ENCODE measurements at regions of chr1 and their contacts with region 1.

Region 1: DNA sequence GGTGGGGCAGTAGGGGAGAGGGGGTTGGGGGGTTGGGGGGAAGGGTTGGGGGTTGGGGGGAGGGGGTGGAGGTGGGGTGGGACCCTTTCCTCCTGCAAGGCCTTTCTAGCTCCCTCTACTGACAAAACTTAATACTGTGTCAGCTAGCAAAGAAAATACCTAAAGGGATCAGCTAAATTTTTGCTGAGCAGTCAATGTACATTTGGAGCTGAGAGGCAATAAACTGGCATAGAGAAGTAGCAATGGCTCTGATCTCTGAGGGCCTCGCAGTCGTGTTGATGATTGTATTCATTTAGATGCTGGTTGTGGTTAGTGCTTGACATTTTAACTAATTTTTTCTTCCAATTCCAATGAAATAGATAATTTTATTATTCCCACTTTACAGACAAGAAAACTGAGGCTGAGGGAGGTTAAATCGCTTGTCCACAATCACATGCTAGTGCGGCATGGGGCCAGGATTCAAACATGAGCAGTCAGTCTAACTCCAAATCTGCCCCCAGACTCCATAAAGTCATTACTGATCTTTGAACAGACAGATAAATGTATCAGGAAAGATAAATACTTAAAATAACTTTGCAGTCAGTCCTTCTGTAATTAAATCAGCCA is 357.1 kb downstream of the DISC1 start:
- DNase-seq: no peak
- ATAC-seq: peak; percentile 74
- H3K4me3 Mint-ChIP-seq: no peak overlapping the region
- H3K27ac Mint-ChIP-seq: no peak overlapping the region
- H3K4me1 Mint-ChIP-seq: peaks cover 17% of the 10 kb centered on the region
- H3K27me3 Mint-ChIP-seq: no peaks in the 10 kb centered on the region; the same call in 1 of the 2 replicates
- CTCF ChIP-seq: peak; percentile 17; the same call in 1 of the 2 replicates

Region 2: DNA sequence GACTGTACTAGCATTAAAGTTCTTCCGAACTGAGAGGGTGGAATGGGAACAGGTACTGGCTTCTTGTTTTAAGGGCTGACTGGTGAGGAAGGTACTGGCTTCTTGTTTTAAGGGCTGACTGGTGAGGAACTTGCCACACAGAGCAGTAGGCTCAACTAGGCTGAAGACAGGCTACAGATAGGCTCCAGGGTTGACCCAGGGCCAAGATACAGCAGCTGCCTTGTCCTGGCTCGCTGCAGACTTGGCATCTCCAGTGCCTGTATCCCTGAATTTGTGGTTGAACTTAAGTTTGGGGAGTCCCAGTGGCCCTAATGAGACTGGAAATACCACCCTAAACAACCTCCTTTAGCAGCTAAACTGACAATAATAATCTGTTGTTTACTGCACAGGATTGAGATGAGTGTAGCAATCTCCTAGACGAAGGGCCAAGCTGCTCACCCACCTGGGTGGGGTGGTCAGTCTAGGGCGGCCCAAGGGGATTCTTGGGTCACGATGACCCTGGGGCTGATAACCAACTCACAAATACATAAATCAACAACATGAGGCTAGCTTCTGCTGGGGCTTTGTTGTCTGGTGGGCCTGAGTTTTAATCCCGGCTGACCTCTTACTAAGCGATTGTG is 130.0 kb before region 1 on chr1:
- CTCF ChIA-PET with region 1: no interaction called
- POLR2A ChIA-PET with region 1: no interaction called
- DNase-seq: no peak
- ATAC-seq: no peak
- H3K4me3 Mint-ChIP-seq: no peak overlapping the region
- H3K27ac Mint-ChIP-seq: no peak overlapping the region
- H3K4me1 Mint-ChIP-seq: peaks cover 23% of the 10 kb centered on the region
- H3K27me3 Mint-ChIP-seq: no peaks in the 10 kb centered on the region; the same call in 1 of the 2 replicates
- CTCF ChIP-seq: no peak

Region 3: DNA sequence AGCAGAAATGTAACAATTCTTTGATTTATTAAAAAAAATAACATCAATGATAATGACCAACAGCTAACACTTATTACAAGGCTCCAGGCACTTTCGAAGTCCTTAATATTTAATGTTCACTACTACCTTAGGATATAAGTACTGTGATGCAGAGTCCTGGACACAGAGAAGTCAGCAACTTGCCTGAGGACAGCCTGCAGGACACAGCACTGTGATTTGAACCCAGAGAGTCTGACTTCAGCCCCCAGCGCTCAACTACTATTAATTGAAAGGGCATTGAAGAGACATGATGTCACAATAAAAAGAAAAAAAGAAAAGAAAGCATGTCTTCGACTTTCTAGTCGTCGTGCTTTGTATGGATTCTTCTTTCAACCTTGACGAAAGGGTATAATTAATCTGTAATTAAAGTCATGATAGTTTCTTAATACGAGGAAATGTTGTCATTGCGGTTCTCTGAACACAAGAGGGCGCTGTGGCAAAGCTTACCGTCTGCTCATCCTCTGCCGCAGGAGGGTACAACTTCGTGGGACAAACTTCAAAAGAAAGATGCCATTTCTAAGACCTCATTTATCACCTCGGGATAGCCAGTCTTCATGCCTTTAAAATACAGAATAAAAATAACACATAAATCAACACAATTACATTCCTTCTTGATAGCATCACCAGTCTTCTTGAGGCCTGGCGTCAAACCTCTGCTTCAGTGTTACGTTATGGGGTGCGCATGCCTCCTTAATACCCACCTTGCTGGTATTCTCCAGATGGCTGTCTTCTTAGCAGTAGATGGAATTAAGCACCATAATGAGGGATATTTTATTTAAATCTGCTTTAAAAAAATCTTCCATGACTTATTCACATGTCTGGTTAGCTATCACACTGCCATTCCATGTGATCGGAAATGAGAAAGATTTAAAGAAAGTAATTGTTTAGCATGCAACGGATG is 117.0 kb before region 1 on chr1:
- CTCF ChIA-PET with region 1: interaction called, 10 read pairs
- POLR2A ChIA-PET with region 1: no interaction called
- DNase-seq: peak; percentile 67
- ATAC-seq: peak; percentile 60
- H3K4me3 Mint-ChIP-seq: no peak overlapping the region
- H3K27ac Mint-ChIP-seq: no peak overlapping the region
- H3K4me1 Mint-ChIP-seq: peaks cover 20% of the 10 kb centered on the region
- H3K27me3 Mint-ChIP-seq: no peaks in the 10 kb centered on the region; the same call in none of the 2 replicates
- CTCF ChIP-seq: peak; percentile 88

Region 4: DNA sequence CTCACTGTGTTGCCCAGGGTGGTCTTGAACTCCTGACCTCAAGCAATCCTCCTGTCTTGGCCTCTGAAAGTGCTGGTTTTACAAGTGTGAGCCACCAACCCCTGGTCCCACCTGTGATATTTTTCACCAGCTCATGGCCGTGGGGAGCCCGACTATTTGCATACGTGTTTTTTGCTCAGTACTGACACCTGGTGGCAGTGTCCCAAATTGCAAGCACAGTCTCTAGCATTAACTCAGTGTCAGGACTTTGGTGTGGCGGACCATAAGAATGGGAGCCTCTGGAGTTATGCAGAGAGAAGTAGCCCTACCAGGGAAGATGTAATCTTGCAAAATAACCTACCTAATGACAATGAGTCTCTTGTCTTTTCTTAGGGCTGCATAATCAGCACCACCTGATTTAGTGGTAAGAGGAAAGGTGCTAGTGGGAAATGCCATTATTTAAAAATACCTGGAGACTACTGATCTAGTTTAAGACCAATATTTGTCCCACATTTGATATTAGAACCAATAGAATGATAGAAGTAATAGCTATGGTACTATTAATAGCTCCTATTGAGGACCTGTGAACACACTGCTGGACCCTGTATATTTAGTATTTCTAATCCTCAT is 51.7 kb before region 1 on chr1:
- CTCF ChIA-PET with region 1: interaction called, 10 read pairs
- POLR2A ChIA-PET with region 1: no interaction called
- DNase-seq: peak; percentile 74
- ATAC-seq: peak; percentile 60
- H3K4me3 Mint-ChIP-seq: no peak overlapping the region
- H3K27ac Mint-ChIP-seq: no peak overlapping the region
- H3K4me1 Mint-ChIP-seq: peaks cover 32% of the 10 kb centered on the region
- H3K27me3 Mint-ChIP-seq: peaks cover 20% of the 10 kb centered on the region
- CTCF ChIP-seq: peak; percentile 90

Region 5: DNA sequence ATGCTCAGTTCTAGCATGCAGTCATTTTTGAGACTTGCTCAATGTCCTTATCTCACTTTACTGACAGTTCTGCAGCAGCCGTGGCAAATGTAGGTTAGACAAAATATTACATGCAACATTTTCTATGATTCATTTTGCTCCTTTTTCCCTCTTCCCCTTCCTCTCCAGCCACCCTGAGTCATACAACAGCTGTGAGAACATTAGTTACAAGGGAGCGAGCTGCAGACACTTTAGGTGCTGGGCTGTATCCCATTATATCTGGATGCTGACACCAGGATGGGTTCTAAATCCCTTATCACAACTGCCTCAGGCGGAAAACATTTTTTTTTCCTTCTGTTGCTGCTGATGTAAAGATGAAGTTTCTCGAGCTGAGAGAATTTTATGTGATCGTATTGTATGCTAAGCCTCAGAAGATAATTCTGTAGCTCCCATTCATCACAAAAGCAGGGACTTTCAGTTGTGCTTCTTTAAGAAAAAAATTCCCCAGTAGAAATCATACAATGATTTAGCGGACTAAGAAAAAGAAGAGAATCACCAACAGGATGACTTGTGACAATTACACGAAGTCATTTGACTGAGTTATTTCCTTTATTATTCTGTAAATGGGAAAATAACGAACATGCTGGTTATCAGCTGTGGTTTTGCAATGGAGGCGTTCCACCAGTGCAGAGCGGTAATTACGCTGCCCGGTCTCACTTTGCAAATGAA is 12.1 kb before region 1 on chr1:
- CTCF ChIA-PET with region 1: interaction called, 16 read pairs
- POLR2A ChIA-PET with region 1: interaction called, 3 read pairs
- DNase-seq: no peak
- ATAC-seq: no peak
- H3K4me3 Mint-ChIP-seq: no peak overlapping the region
- H3K27ac Mint-ChIP-seq: no peak overlapping the region
- H3K4me1 Mint-ChIP-seq: no peaks in the 10 kb centered on the region; the same call in none of the 2 replicates
- H3K27me3 Mint-ChIP-seq: no peaks in the 10 kb centered on the region
- CTCF ChIP-seq: no peak

Region 6: DNA sequence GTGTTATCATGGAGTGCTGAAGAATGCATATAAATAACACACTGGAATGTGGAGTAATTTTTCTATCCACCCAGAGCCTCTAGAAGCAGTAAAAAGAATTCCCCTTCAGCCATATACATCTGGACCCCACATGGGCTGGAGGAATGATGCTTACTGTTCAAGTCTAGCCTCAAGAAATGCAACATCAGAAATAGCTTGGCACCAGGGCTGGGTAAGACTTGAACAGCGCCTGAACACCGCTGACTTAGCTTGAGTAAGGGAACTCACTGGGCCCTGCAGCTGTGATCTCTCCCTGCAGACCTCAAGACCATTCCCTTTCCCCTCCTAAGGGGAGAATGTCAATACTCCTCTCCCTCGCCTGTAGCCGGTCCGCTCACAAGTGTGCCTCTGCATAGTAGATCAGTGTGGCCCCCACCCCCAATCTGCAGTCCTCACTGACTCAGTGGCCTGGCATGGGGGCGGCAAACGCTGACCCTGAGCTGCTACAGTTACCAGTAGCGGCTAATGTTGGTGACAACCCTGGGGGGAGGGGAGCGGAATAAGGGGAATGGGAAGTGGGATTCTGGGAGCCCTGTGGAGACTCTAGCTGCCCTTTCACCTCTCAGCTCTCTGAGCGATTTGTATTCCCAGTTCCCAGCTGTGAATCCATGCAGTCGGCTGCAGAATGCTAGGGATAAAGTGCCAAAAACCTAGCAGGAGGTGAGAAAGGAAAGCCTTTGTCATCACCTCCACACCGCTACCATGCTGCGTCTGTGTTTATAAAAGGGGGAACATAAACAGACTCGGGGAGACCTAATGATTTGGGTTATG is 126.8 kb after region 1 on chr1:
- CTCF ChIA-PET with region 1: interaction called, 10 read pairs
- POLR2A ChIA-PET with region 1: no interaction called
- DNase-seq: peak; percentile 73
- ATAC-seq: peak; percentile 94
- H3K4me3 Mint-ChIP-seq: peak overlapping the region; percentile 61
- H3K27ac Mint-ChIP-seq: peak overlapping the region; percentile 94
- H3K4me1 Mint-ChIP-seq: peaks cover 71% of the 10 kb centered on the region
- H3K27me3 Mint-ChIP-seq: peaks cover 27% of the 10 kb centered on the region
- CTCF ChIP-seq: no peak

Region 7: DNA sequence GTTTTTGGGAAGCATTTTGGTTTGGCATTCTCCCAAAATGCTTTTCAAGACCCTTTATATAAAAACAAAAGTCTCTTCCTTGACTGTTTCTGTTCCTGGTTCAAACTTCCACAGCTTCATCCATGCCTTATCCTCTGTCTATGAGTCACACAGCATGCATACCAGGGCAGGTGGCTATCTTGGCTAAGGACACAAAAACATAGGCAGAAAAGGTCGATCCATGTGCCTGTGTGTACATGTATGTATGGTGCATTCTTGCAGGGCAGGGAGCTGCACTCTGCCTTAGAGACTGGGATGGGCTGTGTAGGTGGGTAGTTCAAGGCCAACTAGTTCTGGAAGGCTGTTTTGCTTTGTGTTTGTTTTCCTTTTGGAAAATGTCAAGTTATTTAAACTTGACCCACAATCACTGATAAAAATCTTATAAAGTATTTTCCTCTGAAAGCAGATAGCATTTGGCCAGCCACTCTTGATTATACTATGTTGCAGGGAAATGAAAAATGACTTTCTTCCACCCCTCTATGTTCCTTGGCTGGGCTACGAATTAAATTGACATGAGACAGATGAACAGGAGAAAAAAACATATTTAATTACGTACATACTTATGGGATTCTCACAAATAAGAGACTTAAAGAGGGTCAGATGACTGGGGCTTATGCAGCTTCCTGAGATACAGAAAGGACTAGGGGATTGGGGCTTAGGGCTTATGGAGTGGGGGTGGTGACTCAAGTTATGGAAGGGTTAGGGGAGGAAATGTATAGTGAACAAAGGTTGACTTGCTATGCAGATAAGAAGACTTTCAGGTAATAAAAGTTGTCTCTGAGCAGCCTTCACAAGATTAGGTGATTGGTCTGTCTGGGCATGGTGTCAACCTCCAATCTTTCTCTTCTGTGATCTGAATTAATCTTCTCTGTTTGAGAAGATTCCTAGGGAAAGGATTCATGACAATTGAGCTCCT is 209.4 kb after region 1 on chr1:
- CTCF ChIA-PET with region 1: no interaction called
- POLR2A ChIA-PET with region 1: no interaction called
- DNase-seq: no peak
- ATAC-seq: no peak
- H3K4me3 Mint-ChIP-seq: no peak overlapping the region
- H3K27ac Mint-ChIP-seq: no peak overlapping the region
- H3K4me1 Mint-ChIP-seq: peaks cover 10% of the 10 kb centered on the region
- H3K27me3 Mint-ChIP-seq: peaks cover 4% of the 10 kb centered on the region; the same call in 1 of the 2 replicates
- CTCF ChIP-seq: no peak

Region 8: DNA sequence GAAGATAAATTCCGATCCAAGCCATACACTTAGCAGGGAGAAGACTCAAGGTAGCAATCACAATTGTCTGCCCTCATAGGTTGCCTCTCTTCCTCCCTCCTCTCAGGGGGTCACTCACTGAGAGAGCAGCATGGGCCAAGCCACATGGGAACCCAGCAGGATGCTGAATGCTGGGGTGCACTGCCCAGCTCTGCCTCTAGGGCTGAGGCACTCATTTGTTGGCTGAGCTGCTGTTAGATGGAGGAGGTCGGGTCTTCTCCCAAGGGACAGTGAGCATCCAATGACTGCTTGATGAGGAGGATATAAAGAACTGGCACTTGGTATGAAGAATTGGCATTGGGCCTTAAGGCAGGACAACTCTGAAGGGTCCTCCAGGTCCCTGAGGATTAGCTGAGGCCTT is 227.5 kb after region 1 on chr1:
- CTCF ChIA-PET with region 1: no interaction called
- POLR2A ChIA-PET with region 1: no interaction called
- DNase-seq: peak; percentile 69
- ATAC-seq: peak; percentile 100
- H3K4me3 Mint-ChIP-seq: no peak overlapping the region
- H3K27ac Mint-ChIP-seq: no peak overlapping the region
- H3K4me1 Mint-ChIP-seq: peaks cover 18% of the 10 kb centered on the region
- H3K27me3 Mint-ChIP-seq: peaks cover 31% of the 10 kb centered on the region
- CTCF ChIP-seq: peak; percentile 59

Measured in WTC11 (cell line).